Activated naive CD4-positive, alpha-beta T cell treated with anti-CD3 and anti-CD28 coated beads, Interleukin-2, amount 10 ng/mL, durations not matched to agents 7 days and 5 days (primary cell): ENCODE measurements at regions of chr20 and their contacts with region 1.

Region 1: DNA sequence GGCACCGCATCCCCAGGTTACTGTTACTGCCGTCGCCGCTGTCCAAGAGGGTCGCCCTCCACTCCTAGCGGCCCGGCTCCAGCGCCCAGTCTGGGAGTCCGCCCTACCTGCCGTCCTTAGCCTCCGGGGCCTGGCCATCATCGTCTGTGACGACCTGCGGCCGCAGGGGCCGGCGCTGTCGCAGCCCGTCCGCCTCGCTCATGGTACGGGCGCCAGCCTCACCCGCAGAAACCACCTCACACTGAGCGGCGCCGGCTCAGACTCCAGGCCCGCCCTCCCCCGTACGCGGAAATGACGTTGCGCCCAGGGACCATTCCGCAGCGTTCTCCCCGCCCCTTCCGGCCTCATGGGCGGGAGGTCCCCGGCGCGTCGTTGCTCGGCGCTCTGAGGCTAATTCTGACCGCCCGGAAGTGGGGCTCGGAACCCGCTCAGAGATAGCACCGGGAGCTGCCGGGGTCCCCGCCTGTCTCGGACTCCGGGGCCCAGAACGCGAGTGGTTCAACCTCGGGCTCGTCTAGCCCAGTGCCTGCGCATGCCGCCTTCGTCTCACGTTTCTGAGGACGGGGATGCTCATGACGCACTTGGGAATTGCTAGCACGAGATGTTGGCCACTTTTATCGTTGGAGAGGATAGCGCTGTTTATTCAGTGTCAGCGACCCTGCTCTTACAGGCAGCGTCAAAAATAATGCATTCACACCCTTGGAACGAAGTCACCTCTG is at the start of gene APMAP:
- DNase-seq: peak; percentile 97
- H3K4me3 Mint-ChIP-seq: peak within 1 kb of the TSS; percentile 91
- H3K27ac Mint-ChIP-seq: peak within 1 kb of the TSS; percentile 87
- H3K4me1 Mint-ChIP-seq: peaks cover 60% of the 10 kb centered on the region
- H3K27me3 Mint-ChIP-seq: peaks cover 20% of the 10 kb centered on the region

Region 2: DNA sequence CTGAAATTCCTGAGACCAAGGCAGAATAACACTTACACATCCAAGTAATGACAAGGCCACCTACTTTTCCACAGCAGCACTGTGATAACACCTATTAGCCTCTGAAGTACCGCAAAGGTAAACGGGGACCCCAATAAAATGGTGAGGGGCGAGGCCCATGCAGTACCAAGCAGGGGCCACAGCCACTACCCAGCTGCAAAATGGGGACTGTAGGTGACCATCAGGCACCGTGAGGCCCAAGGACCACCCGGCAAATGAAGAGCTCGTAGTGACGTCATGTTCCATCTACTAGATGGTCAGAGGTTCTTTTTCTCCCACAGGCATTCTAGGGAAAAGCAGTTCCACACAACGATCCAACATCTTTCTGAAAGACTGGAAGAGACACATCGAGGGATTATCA is 19.4 kb before region 1 on chr20:
- CTCF ChIA-PET with region 1: no interaction called
- DNase-seq: peak; percentile 12
- H3K4me3 Mint-ChIP-seq: no peak overlapping the region
- H3K27ac Mint-ChIP-seq: no peak overlapping the region
- H3K4me1 Mint-ChIP-seq: no peaks in the 10 kb centered on the region
- H3K27me3 Mint-ChIP-seq: no peaks in the 10 kb centered on the region

Region 3: GRCh38 chr20:25065625-25066338 is 73.1 kb after region 1 on chr20:
- CTCF ChIA-PET with region 1: interaction called, 184 read pairs
- DNase-seq: peak; percentile 79
- H3K4me3 Mint-ChIP-seq: no peak overlapping the region
- H3K27ac Mint-ChIP-seq: no peak overlapping the region
- H3K4me1 Mint-ChIP-seq: peaks cover 3% of the 10 kb centered on the region
- H3K27me3 Mint-ChIP-seq: peaks cover 64% of the 10 kb centered on the region

Region 4: DNA sequence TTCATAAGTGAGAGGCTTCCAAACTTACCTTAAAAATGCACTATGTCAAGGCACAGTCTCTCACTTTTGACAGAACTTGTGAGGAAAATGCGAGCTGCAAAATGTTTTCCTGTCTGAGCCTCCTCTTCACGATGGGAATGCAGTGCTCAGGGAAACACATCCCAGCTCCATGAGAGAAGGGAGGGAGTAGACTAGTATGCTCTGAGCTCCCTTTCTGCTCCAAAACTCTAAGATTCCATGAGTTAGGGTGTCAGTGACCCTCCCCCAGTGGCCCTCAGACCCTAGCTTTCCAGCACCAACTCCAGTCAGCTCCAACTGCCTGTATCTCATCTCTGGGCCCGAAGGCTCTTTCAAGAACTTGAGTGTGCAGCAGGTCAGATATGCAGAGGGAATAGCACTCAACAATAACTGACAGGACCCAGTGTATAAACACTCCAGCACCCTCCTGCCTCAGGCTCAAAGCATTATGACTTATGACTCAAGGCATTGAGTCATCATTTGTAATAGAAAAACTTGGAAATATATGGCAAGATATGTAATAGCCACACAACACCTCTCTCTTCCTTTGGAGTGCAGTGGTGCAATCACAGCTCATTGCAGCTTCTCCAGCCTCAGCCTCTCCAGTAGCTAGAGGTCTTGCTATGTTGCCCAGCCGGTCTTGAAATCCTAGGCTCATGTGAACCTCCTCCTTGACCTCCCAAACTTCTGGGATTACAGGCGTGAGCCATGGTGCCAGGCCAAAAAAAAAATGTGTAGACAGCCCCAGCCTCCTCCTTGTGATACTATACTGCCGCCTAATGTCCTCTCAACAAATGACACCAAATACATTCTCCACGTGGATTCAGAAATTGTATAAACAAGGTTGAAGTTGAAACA is 186.2 kb after region 1 on chr20:
- CTCF ChIA-PET with region 1: interaction called, 36 read pairs
- DNase-seq: no peak
- H3K4me3 Mint-ChIP-seq: no peak overlapping the region
- H3K27ac Mint-ChIP-seq: no peak overlapping the region
- H3K4me1 Mint-ChIP-seq: no peaks in the 10 kb centered on the region
- H3K27me3 Mint-ChIP-seq: peaks cover 14% of the 10 kb centered on the region